ENCODE measurements at regions of chr4 and their contacts with region 1.

Region 1: DNA sequence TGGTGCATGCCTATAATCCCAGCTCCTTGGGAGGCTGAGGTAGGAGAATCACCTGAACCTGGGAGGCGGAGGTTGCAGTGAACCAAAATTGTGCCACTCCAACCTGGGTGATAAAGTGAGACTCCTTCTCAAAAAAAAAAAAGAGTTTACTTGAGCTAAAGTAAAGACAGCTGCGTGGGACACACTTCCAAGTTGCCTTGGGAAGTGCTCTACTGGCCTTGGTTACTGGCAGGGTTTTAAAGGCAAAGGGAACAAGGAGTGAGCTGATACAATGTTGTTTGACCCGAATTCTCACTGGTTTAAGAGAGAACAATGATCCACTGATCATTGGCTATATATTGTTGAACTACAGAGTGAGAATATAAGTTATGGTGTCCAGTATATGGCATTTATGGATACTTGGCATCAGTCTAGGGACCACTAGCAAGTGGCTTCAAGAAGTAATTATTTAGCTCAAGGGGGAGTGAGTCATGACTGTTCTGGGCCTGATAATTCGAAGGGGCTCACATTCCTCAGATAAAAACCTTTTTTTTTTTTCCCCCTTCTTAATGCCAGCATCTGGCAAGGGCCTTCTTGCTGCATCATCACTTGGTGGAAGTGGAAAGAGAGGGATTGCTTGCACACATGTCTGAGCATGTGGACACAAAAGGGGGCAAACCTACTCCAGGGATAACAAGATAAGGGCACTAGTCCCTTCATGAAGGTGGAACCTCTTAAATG is 32.3 kb downstream of the GRK4 start:
- DNase-seq: no peak
- H3K4me3 ChIP-seq: no peak overlapping the region
- H3K27ac ChIP-seq: no peak overlapping the region
- H3K4me1 ChIP-seq: no peaks in the 10 kb centered on the region
- H3K27me3 ChIP-seq: no peaks in the 10 kb centered on the region
- CTCF ChIP-seq: no peak

Region 2: DNA sequence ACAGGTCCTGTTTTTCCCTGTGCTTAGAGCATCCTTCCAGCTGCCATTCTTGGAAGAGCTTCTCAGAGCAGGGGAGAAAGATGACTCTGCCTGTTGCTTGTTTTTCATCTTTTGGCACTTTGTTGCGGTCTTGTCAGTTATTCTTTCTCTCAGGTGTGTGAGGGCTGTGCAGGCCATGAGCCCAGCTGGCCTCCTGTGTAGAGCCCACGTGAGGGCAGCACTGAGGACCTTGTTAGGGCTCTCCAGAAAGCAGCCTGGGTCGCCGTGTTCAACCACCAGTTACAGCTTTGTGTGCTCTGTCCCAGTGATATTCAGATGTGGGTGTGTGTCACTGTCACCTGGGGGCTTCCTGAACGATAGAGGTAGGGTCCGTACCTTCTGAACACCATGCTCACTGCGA is 85.3 kb before region 1 on chr4:
- CTCF ChIA-PET with region 1: no interaction called
- dilution Hi-C with region 1: no loop called
- in situ Hi-C with region 1: no loop called
- intact Hi-C with region 1: no loop called
- DNase-seq: no peak
- H3K4me3 ChIP-seq: no peak overlapping the region
- H3K27ac ChIP-seq: no peak overlapping the region
- H3K4me1 ChIP-seq: no peaks in the 10 kb centered on the region
- H3K27me3 ChIP-seq: no peaks in the 10 kb centered on the region
- CTCF ChIP-seq: no peak

Region 3: DNA sequence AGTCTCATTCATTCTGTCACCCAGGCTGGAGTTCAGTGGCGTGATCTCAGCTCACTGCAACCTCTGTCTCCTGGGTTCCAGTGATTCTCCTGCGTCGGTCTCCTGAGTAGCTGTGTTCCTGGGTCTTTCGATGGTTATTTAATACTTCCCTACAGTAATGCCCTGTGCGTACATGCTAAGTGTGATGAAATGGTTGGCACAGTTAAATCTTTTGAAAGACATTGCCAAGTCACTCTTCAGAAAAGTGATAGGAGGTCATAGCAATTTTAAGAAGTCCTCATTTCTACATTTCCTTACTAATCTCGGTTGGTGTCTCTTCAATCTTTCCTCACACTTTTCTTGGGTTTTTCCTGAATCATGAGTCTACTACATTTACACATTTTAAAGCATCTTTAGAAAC is 64.2 kb after region 1 on chr4:
- CTCF ChIA-PET with region 1: no interaction called
- dilution Hi-C with region 1: loop called (anchors 5 kb)
- in situ Hi-C with region 1: no loop called
- intact Hi-C with region 1: no loop called
- DNase-seq: no peak
- H3K4me3 ChIP-seq: no peak overlapping the region
- H3K27ac ChIP-seq: no peak overlapping the region
- H3K4me1 ChIP-seq: no peaks in the 10 kb centered on the region
- H3K27me3 ChIP-seq: no peaks in the 10 kb centered on the region
- CTCF ChIP-seq: no peak